Activated T-helper 1 cell treated with anti-CD3 and anti-CD28 coated beads, Interleukin-12 subunit alpha, Interleukin-12 subunit beta, Interleukin-2, Interleukin-4 antibody, amounts not matched to agents 30 ng/mL and 10 ng/mL and 1 ng/mL, durations not matched to agents 14 hours and 24 hours and 36 hours (primary cell): ENCODE measurements at regions of chr3 and their contacts with region 1.

Region 1: DNA sequence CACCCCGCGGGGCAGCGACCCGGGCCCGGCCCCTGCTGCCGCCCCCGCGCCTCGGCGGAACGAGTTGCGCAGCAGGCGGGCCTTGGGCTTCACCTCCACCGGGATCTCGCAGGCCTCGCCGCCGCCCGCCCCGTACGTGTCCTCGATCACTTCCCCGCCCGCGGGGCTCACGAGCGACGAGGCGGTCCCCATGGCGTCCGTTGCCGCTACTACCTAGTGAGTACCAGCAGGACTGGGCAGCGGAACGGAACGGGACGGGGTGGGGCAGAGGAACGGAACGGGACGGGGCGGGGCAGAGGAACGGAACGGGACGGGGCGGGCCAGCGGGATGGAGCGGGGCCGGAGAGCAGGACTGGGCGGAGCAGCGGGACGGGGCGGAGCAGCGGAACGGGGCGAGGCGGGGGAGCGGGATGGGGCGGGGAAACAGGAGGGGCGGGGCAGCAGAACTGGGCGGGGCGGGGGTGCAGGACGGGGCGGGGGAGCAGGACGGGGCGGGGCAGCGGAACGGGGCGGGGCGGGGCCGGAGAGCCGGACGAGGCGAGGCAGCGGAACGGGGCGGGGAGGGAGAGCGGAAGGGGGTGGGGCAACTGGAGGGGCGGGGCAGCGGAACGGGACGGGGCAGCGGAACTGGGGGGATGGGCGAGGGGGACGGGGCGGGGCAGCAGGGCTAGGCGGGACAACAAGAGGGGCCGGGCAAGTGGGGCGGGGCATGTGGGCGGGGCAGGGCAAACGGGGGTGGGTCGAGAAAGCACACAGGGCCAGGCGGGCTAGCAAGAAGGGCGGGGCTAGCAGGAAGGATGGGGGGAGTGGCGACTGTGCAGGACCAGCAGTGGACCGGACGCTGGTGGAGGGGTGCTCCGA is at the start of gene NPHP3:
- DNase-seq: peak; percentile 85
- H3K4me3 Mint-ChIP-seq: peak within 1 kb of the TSS; percentile 95
- H3K27ac Mint-ChIP-seq: peak within 1 kb of the TSS; percentile 91
- H3K4me1 Mint-ChIP-seq: peaks cover 36% of the 10 kb centered on the region
- H3K27me3 Mint-ChIP-seq: peaks cover 4% of the 10 kb centered on the region
- total RNA-seq, gene NPHP3: 14.4 and 17.0 TPM in 2 replicates

Region 2: GRCh38 chr3:132416807-132417694 is 305.3 kb before region 1 on chr3 and contains the start of gene DNAJC13:
- intact Hi-C with region 1: loop called (anchors 1 kb)
- DNase-seq: peak; percentile 90
- H3K4me3 Mint-ChIP-seq: peak within 1 kb of the TSS; percentile 100
- H3K27ac Mint-ChIP-seq: peak within 1 kb of the TSS; percentile 98
- H3K4me1 Mint-ChIP-seq: peaks cover 31% of the 10 kb centered on the region
- H3K27me3 Mint-ChIP-seq: no peaks in the 10 kb centered on the region
- total RNA-seq, gene DNAJC13: 30.2 and 34.0 TPM in 2 replicates

Region 3: GRCh38 chr3:132800958-132801357 is 78.6 kb after region 1 on chr3:
- intact Hi-C with region 1: no loop called
- DNase-seq: no peak
- H3K4me3 Mint-ChIP-seq: no peak overlapping the region
- H3K27ac Mint-ChIP-seq: no peak overlapping the region
- H3K4me1 Mint-ChIP-seq: no peaks in the 10 kb centered on the region
- H3K27me3 Mint-ChIP-seq: no peaks in the 10 kb centered on the region

Region 4: GRCh38 chr3:133049491-133049890 is 327.1 kb after region 1 on chr3:
- intact Hi-C with region 1: loop called (anchors 5 kb)
- DNase-seq: no peak
- H3K4me3 Mint-ChIP-seq: no peak overlapping the region
- H3K27ac Mint-ChIP-seq: no peak overlapping the region
- H3K4me1 Mint-ChIP-seq: no peaks in the 10 kb centered on the region
- H3K27me3 Mint-ChIP-seq: peaks cover 15% of the 10 kb centered on the region

Region 5: DNA sequence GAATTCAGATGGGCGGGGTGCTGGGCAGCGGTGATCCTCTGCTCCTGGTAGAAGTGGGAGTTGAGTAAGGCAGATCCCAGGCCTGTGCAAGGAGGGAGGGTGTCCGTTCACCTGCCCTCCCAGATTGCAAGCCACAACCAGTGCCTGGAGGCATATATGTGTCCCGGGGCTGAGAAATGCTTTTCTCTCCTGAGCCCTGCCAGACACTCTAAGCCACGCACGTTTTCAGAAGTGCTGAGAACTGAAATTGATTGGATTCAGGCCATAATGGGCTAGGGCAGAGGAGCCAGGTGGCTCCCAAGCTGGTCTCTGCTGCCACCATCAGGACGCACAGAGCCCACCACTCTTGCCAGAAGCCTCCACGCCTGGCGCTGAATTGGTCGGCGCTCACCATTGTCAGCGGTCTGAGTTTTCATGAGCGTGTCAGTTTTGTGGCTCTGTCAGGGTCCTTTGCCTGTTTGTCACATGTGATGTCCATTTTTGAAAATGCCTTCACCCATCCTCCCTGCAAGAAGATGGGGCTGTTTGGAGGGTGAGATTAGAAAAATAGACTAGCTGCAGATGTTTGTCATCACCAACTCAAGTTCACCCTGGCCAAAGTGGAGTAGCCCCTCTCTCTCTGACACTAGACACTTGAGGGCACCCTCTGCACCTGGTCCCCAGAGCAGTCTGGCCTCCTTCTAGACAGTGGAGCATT is 662.1 kb after region 1 on chr3:
- intact Hi-C with region 1: loop called (anchors 1 kb)
- DNase-seq: no peak
- H3K4me3 Mint-ChIP-seq: no peak overlapping the region
- H3K27ac Mint-ChIP-seq: no peak overlapping the region
- H3K4me1 Mint-ChIP-seq: no peaks in the 10 kb centered on the region
- H3K27me3 Mint-ChIP-seq: no peaks in the 10 kb centered on the region

Region 6: DNA sequence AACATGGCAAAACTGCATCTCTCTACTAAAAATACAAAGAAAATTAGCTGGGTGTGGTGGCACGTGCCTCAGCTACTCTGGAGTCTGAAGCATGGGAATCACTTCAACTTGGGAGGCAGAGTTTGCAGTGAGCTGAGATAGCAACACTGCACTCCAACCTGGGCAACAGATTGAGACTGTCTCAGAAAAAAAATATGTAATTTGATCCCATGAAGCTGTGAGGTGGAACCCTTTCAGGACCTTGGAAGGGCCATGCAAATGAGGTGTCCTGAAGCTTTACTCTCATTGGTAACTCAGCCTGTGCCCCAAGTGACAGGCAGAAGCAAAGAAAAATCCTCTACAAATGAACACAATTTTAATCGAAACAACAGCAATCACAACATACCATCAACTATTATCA is 766.5 kb after region 1 on chr3:
- intact Hi-C with region 1: loop called (anchors 2 kb)
- DNase-seq: no peak
- H3K4me3 Mint-ChIP-seq: no peak overlapping the region
- H3K27ac Mint-ChIP-seq: no peak overlapping the region
- H3K4me1 Mint-ChIP-seq: peaks cover 48% of the 10 kb centered on the region
- H3K27me3 Mint-ChIP-seq: peaks cover 3% of the 10 kb centered on the region

Region 7: GRCh38 chr3:133805527-133806475 is 1083.4 kb after region 1 on chr3 and contains the start of gene SRPRB:
- intact Hi-C with region 1: loop called (anchors 1 kb)
- DNase-seq: peak; percentile 95
- H3K4me3 Mint-ChIP-seq: peak within 1 kb of the TSS; percentile 99
- H3K27ac Mint-ChIP-seq: peak within 1 kb of the TSS; percentile 95
- H3K4me1 Mint-ChIP-seq: peaks cover 28% of the 10 kb centered on the region
- H3K27me3 Mint-ChIP-seq: peaks cover 7% of the 10 kb centered on the region
- total RNA-seq, gene SRPRB: 108 and 115 TPM in 2 replicates

Region 8: GRCh38 chr3:134485718-134486576 is 1763.6 kb after region 1 on chr3 and contains the starts of genes ANAPC13 and CEP63:
- intact Hi-C with region 1: loop called (anchors 2 kb)
- DNase-seq: peak; percentile 87
- H3K4me3 Mint-ChIP-seq: peak within 1 kb of the TSS; percentile 92
- H3K27ac Mint-ChIP-seq: peak within 1 kb of the TSS; percentile 100
- H3K4me1 Mint-ChIP-seq: peaks cover 47% of the 10 kb centered on the region
- H3K27me3 Mint-ChIP-seq: peaks cover 3% of the 10 kb centered on the region
- total RNA-seq, gene ANAPC13: 25.2 and 26.8 TPM in 2 replicates
- total RNA-seq, gene CEP63: 20.0 and 22.2 TPM in 2 replicates